Esophagus muscularis mucosa (tissue), 4 donors: ENCODE measurements at regions of chr2 and their contacts with region 1.

Region 1: GRCh38 chr2:128321784-128322714 is 3.4 kb upstream of the HS6ST1 start:
- DNase-seq: peak; percentile 95
- H3K4me3 ChIP-seq: peak overlapping the region; percentile 56 to 70 (median 67)
- H3K27ac ChIP-seq: peak overlapping the region; percentile 79 to 83 (median 80)
- H3K4me1 ChIP-seq: peaks cover 38 to 84% (median 55%) of the 10 kb centered on the region in 4 donors
- H3K27me3 ChIP-seq: no peaks in the 10 kb centered on the region
- CTCF ChIP-seq: peak; percentile 97 to 99 (median 99)
- EP300 ChIP-seq: no peak
- POLR2A ChIP-seq: no peak

Region 2: GRCh38 chr2:127841466-127842178 is 480.4 kb before region 1 on chr2:
- intact Hi-C with region 1: no loop called
- DNase-seq: no peak
- H3K4me3 ChIP-seq: no peak overlapping the region
- H3K27ac ChIP-seq: no peak overlapping the region
- H3K4me1 ChIP-seq: no peaks in the 10 kb centered on the region
- H3K27me3 ChIP-seq: no peaks in the 10 kb centered on the region
- CTCF ChIP-seq: no peak
- EP300 ChIP-seq: no peak
- POLR2A ChIP-seq: no peak

Region 3: GRCh38 chr2:128178650-128179460 is 143.2 kb before region 1 on chr2:
- intact Hi-C with region 1: loop called (anchors 2 kb)
- DNase-seq: no peak
- H3K4me3 ChIP-seq: no peak overlapping the region
- H3K27ac ChIP-seq: peak overlapping the region in 3 of 4 donors; percentile 54 to 74 (median 63)
- H3K4me1 ChIP-seq: peaks cover 5 to 12% (median 9%) of the 10 kb centered on the region in 4 donors
- H3K27me3 ChIP-seq: no peaks in the 10 kb centered on the region
- CTCF ChIP-seq: peak; percentile 79 to 90 (median 83)
- EP300 ChIP-seq: no peak
- POLR2A ChIP-seq: no peak

Region 4: DNA sequence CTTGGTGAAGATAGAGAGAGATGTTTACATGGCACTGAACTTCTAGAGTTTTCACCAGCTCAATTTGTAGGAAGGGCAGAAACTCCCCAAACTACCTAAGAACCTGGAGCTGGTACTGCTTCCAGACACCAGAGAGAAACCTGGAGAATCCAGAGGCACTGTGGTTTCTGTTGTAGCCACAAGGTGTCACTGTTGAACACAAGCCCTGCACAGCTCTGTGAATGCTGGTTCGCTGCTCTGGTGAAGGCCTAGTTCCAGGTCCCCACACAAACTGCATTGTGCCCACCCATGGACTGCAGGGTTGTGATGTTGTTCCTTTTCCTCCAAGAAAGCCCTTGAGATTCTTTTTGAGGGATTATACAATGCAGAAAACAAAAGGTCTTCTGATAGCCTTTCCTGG is 147.2 kb after region 1 on chr2:
- intact Hi-C with region 1: loop called (anchors 10 kb)
- DNase-seq: peak; percentile 14
- H3K4me3 ChIP-seq: no peak overlapping the region
- H3K27ac ChIP-seq: no peak overlapping the region
- H3K4me1 ChIP-seq: peaks cover 21 to 29% (median 23%) of the 10 kb centered on the region in 4 donors
- H3K27me3 ChIP-seq: no peaks in the 10 kb centered on the region
- CTCF ChIP-seq: peak in 1 of 3 experiments; percentile 14
- EP300 ChIP-seq: no peak
- POLR2A ChIP-seq: no peak

Region 5: DNA sequence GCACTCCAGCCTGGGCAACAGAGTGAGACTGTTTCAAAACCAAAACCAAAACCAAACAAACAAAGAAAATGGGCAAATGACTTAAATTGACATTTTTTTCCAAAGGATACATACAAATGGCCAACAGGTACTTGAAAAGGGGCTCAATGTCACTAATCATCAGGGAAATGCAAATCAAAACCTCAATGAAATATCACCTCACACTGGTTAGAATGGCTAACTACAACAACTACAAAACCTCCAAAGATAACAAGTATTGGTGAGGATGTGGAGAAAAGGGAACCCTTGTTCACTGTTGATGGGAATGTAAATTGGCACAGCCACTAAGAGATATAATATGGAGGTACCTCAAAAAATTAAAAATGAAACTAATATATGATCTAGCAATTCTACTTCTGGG is 209.8 kb after region 1 on chr2:
- intact Hi-C with region 1: loop called (anchors 2 kb)
- DNase-seq: no peak
- H3K4me3 ChIP-seq: no peak overlapping the region
- H3K27ac ChIP-seq: no peak overlapping the region
- H3K4me1 ChIP-seq: no peaks in the 10 kb centered on the region
- H3K27me3 ChIP-seq: no peaks in the 10 kb centered on the region
- CTCF ChIP-seq: peak; percentile 30 to 46 (median 31)
- EP300 ChIP-seq: no peak
- POLR2A ChIP-seq: no peak

Region 6: DNA sequence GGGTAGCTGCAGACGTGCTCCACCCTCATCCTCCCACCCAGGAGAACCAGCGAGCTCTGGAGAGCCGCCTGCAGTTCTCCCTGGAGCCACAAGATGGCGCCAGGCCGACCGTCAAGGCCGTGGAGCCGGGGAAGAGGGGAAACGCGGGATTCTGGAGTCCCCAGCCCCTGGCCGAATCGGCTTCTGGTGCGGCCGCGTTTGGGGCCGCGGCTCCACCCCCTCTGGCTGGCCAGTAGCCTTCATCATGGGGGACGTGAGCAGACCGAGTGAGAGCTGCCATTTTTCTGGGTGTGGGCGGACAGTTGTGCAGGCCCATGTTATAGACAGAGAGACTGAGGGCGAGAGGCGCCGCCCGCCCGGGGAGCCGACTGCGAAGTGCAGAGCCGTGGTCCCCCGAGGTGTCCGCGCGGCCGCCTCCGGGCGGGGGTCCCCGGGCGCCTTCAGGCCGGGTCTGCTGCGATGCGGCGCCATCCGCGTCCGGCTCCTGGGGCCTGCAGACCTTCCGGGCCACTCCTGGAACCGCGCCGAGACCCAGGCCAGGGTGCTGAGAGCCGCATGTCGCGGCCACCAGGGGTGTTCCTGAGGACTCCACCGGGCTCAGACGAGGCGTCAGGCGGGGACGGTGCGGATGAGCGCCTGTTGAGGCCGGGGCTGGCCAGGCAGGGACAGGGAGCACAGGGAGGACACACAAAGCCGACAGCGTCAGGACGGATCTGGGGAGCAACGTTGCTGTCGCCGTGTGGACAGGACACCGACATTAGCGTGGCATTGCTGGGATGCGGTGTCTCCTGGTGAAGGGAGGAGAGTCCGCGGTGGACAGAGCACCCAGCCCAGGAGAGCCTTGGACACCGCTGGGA is 414.9 kb after region 1 on chr2:
- intact Hi-C with region 1: loop called (anchors 5 kb)
- DNase-seq: peak; percentile 93
- H3K4me3 ChIP-seq: peak overlapping the region; percentile 37 to 45 (median 44)
- H3K27ac ChIP-seq: no peak overlapping the region
- H3K4me1 ChIP-seq: peaks cover 27 to 37% (median 32%) of the 10 kb centered on the region in 4 donors
- H3K27me3 ChIP-seq: peaks cover 0 to 29% (median 0%) of the 10 kb centered on the region in 4 donors
- CTCF ChIP-seq: peak in 2 of 3 experiments; percentile 90 to 96
- EP300 ChIP-seq: no peak
- POLR2A ChIP-seq: no peak